CD4-positive, alpha-beta T cell (primary cell): ENCODE measurements at regions of chr2 and their contacts with region 1.

Region 1: DNA sequence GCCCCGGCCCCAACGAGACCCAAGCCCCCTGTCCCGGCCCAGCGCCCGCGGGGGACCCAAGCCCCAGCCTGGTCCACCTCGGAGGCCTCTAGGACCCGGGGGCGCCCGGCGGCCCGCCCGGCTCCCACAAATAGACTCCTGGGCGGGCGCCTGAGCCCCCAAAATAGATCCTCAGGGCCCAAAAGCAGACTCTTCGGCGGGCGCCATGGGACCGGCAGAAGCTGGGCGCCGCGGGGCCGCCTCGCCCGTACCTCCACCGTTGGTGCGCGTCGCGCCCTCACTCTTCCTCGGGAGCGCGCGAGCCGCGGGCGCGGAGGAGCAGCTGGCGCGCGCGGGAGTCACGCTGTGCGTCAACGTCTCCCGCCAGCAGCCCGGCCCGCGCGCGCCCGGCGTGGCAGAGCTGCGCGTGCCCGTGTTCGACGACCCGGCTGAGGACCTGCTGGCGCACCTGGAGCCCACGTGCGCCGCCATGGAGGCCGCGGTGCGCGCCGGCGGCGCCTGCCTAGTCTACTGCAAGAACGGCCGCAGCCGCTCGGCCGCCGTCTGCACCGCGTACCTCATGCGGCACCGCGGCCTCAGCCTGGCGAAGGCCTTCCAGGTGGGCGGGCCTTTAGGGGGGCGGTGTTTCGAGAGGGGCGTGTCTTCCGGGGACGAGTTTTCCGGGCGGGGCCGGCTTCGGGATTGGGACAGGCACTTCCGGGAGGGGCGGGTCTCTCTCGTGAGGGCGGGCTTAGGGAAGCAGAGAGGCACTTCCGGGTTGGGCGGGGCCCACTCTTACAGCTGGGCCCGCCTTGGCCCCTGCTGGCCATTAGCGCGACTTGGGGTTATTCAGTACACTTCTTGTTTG is 546 bp downstream of the DUSP28 start:
- DNase-seq: peak in 13 of 14 experiments; percentile 99 to 100 (median 100)
- ATAC-seq: peak; percentile 50
- H3K4me3 ChIP-seq: peak overlapping the region; percentile 53
- H3K4me3 Mint-ChIP-seq: peak overlapping the region; percentile 90
- H3K27ac ChIP-seq: peak overlapping the region; percentile 62 to 95
- H3K27ac Mint-ChIP-seq: peak overlapping the region; percentile 98
- H3K4me1 ChIP-seq: peaks cover 87% of the 10 kb centered on the region
- H3K4me1 Mint-ChIP-seq: peaks cover 80% of the 10 kb centered on the region
- H3K27me3 ChIP-seq: no peaks in the 10 kb centered on the region
- H3K27me3 Mint-ChIP-seq: no peaks in the 10 kb centered on the region
- CTCF ChIP-seq: no peak

Region 2: GRCh38 chr2:240136013-240136670 is 424.6 kb before region 1 on chr2 and contains the start of gene COPS9:
- CTCF ChIA-PET with region 1: no interaction called
- POLR2A ChIA-PET with region 1: no interaction called
- intact Hi-C with region 1: loop called in 1 of 2 experiments (anchors 10 kb)
- DNase-seq: peak; percentile 80 to 93 (median 86)
- ATAC-seq: peak; percentile 94
- H3K4me3 ChIP-seq: peak within 1 kb of the TSS; percentile 94
- H3K4me3 Mint-ChIP-seq: peak within 1 kb of the TSS; percentile 95
- H3K27ac ChIP-seq: peak within 1 kb of the TSS; percentile 24 to 40
- H3K27ac Mint-ChIP-seq: peak within 1 kb of the TSS; percentile 71
- H3K4me1 ChIP-seq: peaks cover 33% of the 10 kb centered on the region
- H3K4me1 Mint-ChIP-seq: peaks cover 33% of the 10 kb centered on the region
- H3K27me3 ChIP-seq: no peaks in the 10 kb centered on the region
- H3K27me3 Mint-ChIP-seq: no peaks in the 10 kb centered on the region
- CTCF ChIP-seq: no peak
- total RNA-seq, gene COPS9: 46.7 to 48.5 TPM

Region 3: GRCh38 chr2:240513549-240514287 is 47.0 kb before region 1 on chr2:
- CTCF ChIA-PET with region 1: interaction called, 31 read pairs
- POLR2A ChIA-PET with region 1: interaction called, 18 read pairs
- intact Hi-C with region 1: loop called (anchors 5 to 10 kb)
- DNase-seq: peak; percentile 76 to 92 (median 80)
- ATAC-seq: peak; percentile 99
- H3K4me3 ChIP-seq: no peak overlapping the region
- H3K4me3 Mint-ChIP-seq: no peak overlapping the region
- H3K27ac ChIP-seq: no peak overlapping the region
- H3K27ac Mint-ChIP-seq: peak overlapping the region; percentile 55
- H3K4me1 ChIP-seq: peaks cover 15% of the 10 kb centered on the region
- H3K4me1 Mint-ChIP-seq: peaks cover 6% of the 10 kb centered on the region
- H3K27me3 ChIP-seq: no peaks in the 10 kb centered on the region
- H3K27me3 Mint-ChIP-seq: no peaks in the 10 kb centered on the region
- CTCF ChIP-seq: peak; percentile 90

Region 4: GRCh38 chr2:240832205-240832727 is 271.6 kb after region 1 on chr2:
- CTCF ChIA-PET with region 1: no interaction called
- POLR2A ChIA-PET with region 1: interaction called, 3 read pairs
- intact Hi-C with region 1: loop called in 1 of 2 experiments (anchors 5 kb)
- DNase-seq: peak; percentile 98 to 100 (median 99)
- ATAC-seq: peak; percentile 91
- H3K4me3 ChIP-seq: peak overlapping the region; percentile 43
- H3K4me3 Mint-ChIP-seq: peak overlapping the region; percentile 38
- H3K27ac ChIP-seq: no peak overlapping the region
- H3K27ac Mint-ChIP-seq: no peak overlapping the region
- H3K4me1 ChIP-seq: peaks cover 14% of the 10 kb centered on the region
- H3K4me1 Mint-ChIP-seq: no peaks in the 10 kb centered on the region
- H3K27me3 ChIP-seq: peaks cover 17 to 26% of the 10 kb centered on the region in 2 experiments
- H3K27me3 Mint-ChIP-seq: peaks cover 36% of the 10 kb centered on the region
- CTCF ChIP-seq: no peak

Region 5: DNA sequence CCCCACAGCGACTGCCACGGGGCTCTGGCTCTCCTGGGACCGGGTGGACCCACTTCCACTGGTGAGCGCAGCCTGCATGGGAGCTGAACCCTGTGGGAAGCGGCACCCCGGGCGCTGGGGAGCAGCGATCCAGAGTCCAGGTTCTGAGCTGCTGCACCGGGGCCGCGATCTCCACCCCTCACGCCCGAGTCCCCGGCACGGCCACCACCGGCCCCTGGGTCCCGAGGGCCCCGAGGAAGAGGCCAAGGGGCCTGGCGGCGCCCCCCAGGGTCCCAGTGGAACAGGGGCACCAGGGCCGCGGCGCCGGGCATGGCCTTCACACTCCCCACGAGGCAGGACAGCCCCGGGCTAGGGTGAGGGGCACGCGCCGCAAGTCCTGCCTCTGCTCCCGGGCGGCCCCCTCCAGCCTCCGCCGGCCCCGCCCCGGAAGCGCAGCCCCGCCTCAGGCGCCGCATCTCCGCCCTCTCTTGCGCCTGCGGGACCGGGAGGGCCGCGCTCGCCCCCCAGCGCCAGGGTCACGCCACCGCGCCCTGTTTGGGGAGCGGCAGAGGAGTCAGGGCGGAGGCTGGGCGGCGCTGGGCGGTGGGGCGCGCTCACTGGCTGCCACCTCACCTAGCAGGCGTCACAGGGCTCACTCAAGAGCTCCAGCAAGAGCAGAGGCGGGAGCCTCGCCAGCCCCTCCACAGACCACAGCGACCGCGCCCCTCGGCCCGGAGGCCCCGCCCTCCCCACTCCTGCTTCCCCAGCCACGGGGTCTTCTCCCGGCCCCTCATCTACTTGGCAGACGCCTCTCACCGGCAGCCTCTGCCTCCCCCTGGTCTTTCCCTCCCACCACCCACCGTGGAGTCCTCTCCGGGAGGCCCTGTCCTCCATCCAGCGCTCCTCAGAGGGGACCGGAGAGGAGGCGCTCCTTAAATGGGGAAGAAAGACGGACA is 1049.4 kb after region 1 on chr2:
- CTCF ChIA-PET with region 1: no interaction called
- POLR2A ChIA-PET with region 1: no interaction called
- intact Hi-C with region 1: loop called in 1 of 2 experiments (anchors 10 kb)
- DNase-seq: peak; percentile 82 to 96 (median 89)
- ATAC-seq: peak; percentile 99
- H3K4me3 ChIP-seq: peak overlapping the region; percentile 49
- H3K4me3 Mint-ChIP-seq: peak overlapping the region; percentile 45
- H3K27ac ChIP-seq: no peak overlapping the region
- H3K27ac Mint-ChIP-seq: peak overlapping the region; percentile 77
- H3K4me1 ChIP-seq: peaks cover 24% of the 10 kb centered on the region
- H3K4me1 Mint-ChIP-seq: peaks cover 25% of the 10 kb centered on the region
- H3K27me3 ChIP-seq: no peaks in the 10 kb centered on the region
- H3K27me3 Mint-ChIP-seq: no peaks in the 10 kb centered on the region
- CTCF ChIP-seq: peak; percentile 65